ENCODE measurements at regions of chr7 and their contacts with region 1.

Region 1: GRCh38 chr7:56003749-56004148 is 39.4 kb downstream of the NIPSNAP2 start:
- DNase-seq: no peak
- H3K4me3 ChIP-seq: no peak overlapping the region
- H3K27ac ChIP-seq: no peak overlapping the region
- H3K4me1 ChIP-seq: no peaks in the 10 kb centered on the region
- CTCF ChIP-seq: no peak

Region 2: DNA sequence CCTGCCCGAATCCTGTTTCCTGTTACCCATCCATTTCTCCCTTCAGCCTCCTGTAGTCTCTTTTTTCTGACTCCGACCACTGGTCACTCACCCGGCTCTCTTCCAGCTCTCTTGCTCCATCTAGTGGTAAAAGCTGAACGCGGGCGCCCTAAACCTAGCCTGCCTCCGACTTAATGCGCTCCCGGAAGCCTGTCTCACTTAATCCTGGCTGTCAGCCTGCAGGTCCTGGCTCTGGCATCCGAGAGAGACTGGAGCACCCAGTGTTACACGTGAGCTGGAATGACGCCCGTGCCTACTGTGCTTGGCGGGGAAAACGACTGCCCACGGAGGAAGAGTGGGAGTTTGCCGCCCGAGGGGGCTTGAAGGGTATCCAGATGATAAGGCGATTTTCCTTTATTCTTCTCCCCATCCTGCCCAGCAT is 70.6 kb after region 1 on chr7:
- CTCF ChIA-PET with region 1: no interaction called
- POLR2A ChIA-PET with region 1: interaction called, 3 read pairs
- intact Hi-C with region 1: loop called (anchors 1 kb)
- DNase-seq: peak; percentile 78
- H3K4me3 ChIP-seq: no peak overlapping the region
- H3K27ac ChIP-seq: no peak overlapping the region
- H3K4me1 ChIP-seq: no peaks in the 10 kb centered on the region
- CTCF ChIP-seq: peak; percentile 93

Region 3: DNA sequence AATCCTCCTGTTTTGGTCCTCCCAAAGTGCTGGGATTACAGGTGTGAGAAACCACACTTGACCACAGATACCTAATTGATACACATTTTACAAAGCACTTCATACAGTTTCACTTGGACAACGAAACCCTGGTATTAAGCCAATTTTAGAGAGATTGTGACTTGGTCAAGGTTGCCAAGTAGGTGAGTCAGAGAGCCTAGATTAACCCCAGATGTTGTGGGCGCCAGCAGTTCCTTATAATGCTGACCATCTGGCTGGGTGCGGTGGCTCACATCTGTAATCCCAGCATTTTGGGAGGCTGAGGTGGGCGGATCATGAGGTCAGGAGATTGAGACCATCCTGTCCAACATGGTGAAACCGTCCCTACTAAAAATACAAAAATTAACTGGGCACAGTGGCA is 94.0 kb after region 1 on chr7:
- CTCF ChIA-PET with region 1: no interaction called
- POLR2A ChIA-PET with region 1: no interaction called
- intact Hi-C with region 1: no loop called
- DNase-seq: no peak
- H3K4me3 ChIP-seq: no peak overlapping the region
- H3K27ac ChIP-seq: no peak overlapping the region
- H3K4me1 ChIP-seq: no peaks in the 10 kb centered on the region
- CTCF ChIP-seq: no peak

Measured in OCI-LY7 (cell line).